ENCODE measurements at regions of chr14 and their contacts with region 1.

Region 1: GRCh38 chr14:100645192-100645990 is 58.2 kb upstream of the BEGAIN start:
- DNase-seq: peak; percentile 78 to 86
- H3K4me3 ChIP-seq: no peak overlapping the region
- H3K4me3 Mint-ChIP-seq: no peak overlapping the region
- H3K27ac Mint-ChIP-seq: no peak overlapping the region
- H3K4me1 ChIP-seq: no peaks in the 10 kb centered on the region
- H3K4me1 Mint-ChIP-seq: no peaks in the 10 kb centered on the region
- H3K27me3 ChIP-seq: no peaks in the 10 kb centered on the region
- H3K27me3 Mint-ChIP-seq: peaks cover 11% of the 10 kb centered on the region
- CTCF ChIP-seq: peak; percentile 76 to 78

Region 2: DNA sequence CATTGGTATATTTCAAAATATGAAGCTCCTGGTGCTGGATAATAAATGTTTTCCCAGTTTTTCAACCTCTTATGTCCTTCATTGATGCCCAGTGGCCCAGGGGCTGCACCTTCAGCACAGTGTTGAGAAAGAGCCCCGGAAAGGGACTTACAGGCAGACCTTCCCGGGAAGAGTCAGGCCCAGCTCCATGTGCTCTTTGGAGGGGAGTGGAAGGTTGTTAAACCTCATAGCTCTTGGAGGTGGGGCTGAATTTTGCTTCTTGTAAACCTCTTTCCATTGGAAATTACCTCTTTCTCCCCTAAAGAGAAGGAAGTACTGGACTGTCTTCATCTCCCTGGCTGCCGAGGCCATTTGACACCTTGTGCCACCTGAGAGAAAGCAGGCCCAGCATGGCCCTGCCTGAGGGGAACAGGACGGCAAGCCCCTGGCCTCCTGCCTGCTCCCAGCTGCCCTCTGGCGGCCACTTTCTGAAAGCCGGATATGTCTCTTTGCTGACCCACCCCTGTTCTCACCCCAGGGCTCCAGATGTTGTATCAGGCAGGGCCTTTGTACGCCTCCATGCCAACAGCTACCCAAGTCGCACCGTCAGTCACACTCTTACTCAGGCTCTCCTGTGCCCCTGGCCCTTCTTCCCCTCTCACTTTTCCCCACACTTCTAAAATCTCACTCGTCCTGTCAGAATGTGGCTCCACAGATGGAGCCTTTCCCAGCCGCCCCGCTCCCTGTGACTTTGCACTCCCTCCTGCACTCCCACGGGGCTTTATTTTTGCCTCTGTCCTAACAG is 537.2 kb before region 1 on chr14:
- CTCF ChIA-PET with region 1: no interaction called
- POLR2A ChIA-PET with region 1: no interaction called
- intact Hi-C with region 1: no loop called
- DNase-seq: peak; percentile 77 to 86
- H3K4me3 ChIP-seq: no peak overlapping the region
- H3K4me3 Mint-ChIP-seq: no peak overlapping the region
- H3K27ac Mint-ChIP-seq: no peak overlapping the region
- H3K4me1 ChIP-seq: no peaks in the 10 kb centered on the region
- H3K4me1 Mint-ChIP-seq: peaks cover 11% of the 10 kb centered on the region
- H3K27me3 ChIP-seq: no peaks in the 10 kb centered on the region
- H3K27me3 Mint-ChIP-seq: no peaks in the 10 kb centered on the region
- CTCF ChIP-seq: peak; percentile 82 to 89

Region 3: GRCh38 chr14:100440187-100440631 is 205.2 kb before region 1 on chr14:
- CTCF ChIA-PET with region 1: interaction called, 63 read pairs
- POLR2A ChIA-PET with region 1: no interaction called
- intact Hi-C with region 1: loop called (anchors 1 kb)
- DNase-seq: peak; percentile 62 to 75
- H3K4me3 ChIP-seq: no peak overlapping the region
- H3K4me3 Mint-ChIP-seq: no peak overlapping the region
- H3K27ac Mint-ChIP-seq: no peak overlapping the region
- H3K4me1 ChIP-seq: no peaks in the 10 kb centered on the region
- H3K4me1 Mint-ChIP-seq: no peaks in the 10 kb centered on the region
- H3K27me3 ChIP-seq: no peaks in the 10 kb centered on the region
- H3K27me3 Mint-ChIP-seq: no peaks in the 10 kb centered on the region
- CTCF ChIP-seq: peak; percentile 42 to 88

Region 4: DNA sequence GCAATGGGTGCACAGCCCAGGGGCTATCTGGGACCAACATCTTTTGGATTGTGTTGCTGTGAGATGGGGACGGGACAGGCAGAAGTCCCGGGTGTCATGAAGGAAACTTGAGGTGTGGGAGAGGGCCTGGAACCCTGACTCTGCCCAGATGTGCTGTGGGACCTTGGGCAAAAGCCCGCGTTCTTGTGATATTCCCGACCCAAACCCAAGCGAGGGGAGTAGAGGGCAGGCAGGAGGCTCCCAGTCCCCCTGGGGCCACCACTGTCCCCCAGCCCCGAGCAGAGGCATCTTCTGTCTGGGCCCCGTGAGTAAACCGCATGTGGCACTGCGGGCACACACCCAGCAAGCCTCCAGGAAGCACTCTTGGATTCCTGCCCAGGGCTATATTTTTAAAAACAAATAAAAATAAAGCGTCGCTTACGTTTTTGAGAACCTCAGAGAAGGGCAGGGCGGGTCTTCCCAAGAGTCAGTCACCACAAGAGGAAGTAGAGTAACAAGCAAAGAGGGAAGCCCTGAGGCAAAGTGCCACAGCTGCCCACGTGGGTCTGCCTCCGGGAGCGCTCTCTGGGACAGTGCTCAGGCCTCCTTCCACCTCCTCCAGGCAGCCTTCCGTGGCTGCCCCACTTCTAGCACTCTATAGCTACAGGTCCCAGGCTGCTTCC is 97.6 kb before region 1 on chr14:
- CTCF ChIA-PET with region 1: no interaction called
- POLR2A ChIA-PET with region 1: no interaction called
- intact Hi-C with region 1: loop called (anchors 10 kb)
- DNase-seq: no peak
- H3K4me3 ChIP-seq: no peak overlapping the region
- H3K4me3 Mint-ChIP-seq: no peak overlapping the region
- H3K27ac Mint-ChIP-seq: no peak overlapping the region
- H3K4me1 ChIP-seq: peaks cover 3% of the 10 kb centered on the region; the same call in 1 of the 2 replicates
- H3K4me1 Mint-ChIP-seq: no peaks in the 10 kb centered on the region
- H3K27me3 ChIP-seq: no peaks in the 10 kb centered on the region
- H3K27me3 Mint-ChIP-seq: no peaks in the 10 kb centered on the region
- CTCF ChIP-seq: no peak

Region 5: GRCh38 chr14:100662879-100663760 is 17.7 kb after region 1 on chr14:
- CTCF ChIA-PET with region 1: interaction called, 10 read pairs
- POLR2A ChIA-PET with region 1: no interaction called
- intact Hi-C with region 1: no loop called
- DNase-seq: peak in 1 of 2 experiments; percentile 74
- H3K4me3 ChIP-seq: no peak overlapping the region
- H3K4me3 Mint-ChIP-seq: no peak overlapping the region
- H3K27ac Mint-ChIP-seq: no peak overlapping the region
- H3K4me1 ChIP-seq: no peaks in the 10 kb centered on the region
- H3K4me1 Mint-ChIP-seq: no peaks in the 10 kb centered on the region
- H3K27me3 ChIP-seq: no peaks in the 10 kb centered on the region
- H3K27me3 Mint-ChIP-seq: peaks cover 5% of the 10 kb centered on the region
- CTCF ChIP-seq: peak; percentile 86